ENCODE measurements at regions of chr1 and their contacts with region 1.

Region 1: GRCh38 chr1:174999216-174999925 is 376 bp upstream of the CACYBP start:
- DNase-seq: peak; percentile 99
- ATAC-seq: peak; percentile 85
- H3K4me3 Mint-ChIP-seq: no peak overlapping the region
- H3K27ac Mint-ChIP-seq: no peak overlapping the region
- H3K4me1 Mint-ChIP-seq: peaks cover 41% of the 10 kb centered on the region
- H3K27me3 Mint-ChIP-seq: no peaks in the 10 kb centered on the region

Region 2: GRCh38 chr1:173476664-173477285 is 1522.6 kb before region 1 on chr1:
- CTCF ChIA-PET with region 1: no interaction called
- POLR2A ChIA-PET with region 1: no interaction called
- intact Hi-C with region 1: loop called in 1 of 2 experiments (anchors 2 kb)
- DNase-seq: peak; percentile 92
- ATAC-seq: peak; percentile 85
- H3K4me3 Mint-ChIP-seq: peak overlapping the region; percentile 89
- H3K27ac Mint-ChIP-seq: peak overlapping the region; percentile 91
- H3K4me1 Mint-ChIP-seq: peaks cover 58% of the 10 kb centered on the region
- H3K27me3 Mint-ChIP-seq: no peaks in the 10 kb centered on the region

Region 3: DNA sequence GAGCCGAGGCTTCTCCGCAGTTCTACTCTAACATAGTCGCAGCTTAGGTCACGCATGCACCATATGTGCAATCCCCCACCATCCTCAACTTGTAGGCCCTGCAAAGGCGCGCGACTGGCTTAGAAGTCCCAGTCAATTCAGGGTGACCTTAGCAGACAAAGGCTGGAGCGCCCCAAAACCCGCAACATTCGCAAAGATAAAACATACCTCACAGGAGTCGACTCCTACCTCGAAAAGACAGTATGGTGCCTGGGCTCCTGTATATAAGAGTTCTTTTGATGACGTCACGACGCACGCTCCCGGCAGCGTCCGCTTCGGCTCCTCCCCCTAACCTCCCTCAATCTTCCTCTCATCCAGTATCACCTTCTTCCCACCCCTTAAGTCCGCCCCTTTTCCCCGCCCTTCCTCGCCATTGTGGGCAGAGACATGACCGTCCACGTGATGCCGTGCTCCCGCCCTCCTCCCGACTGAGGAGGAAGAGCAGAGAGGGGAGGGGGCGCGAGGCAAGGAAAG is 1131.6 kb before region 1 on chr1 and contains the start of gene GAS5:
- CTCF ChIA-PET with region 1: no interaction called
- POLR2A ChIA-PET with region 1: interaction called, 3 read pairs
- intact Hi-C with region 1: loop called in 1 of 2 experiments (anchors 2 kb)
- DNase-seq: peak; percentile 100
- ATAC-seq: peak; percentile 82
- H3K4me3 Mint-ChIP-seq: peak within 1 kb of the TSS; percentile 91
- H3K27ac Mint-ChIP-seq: peak within 1 kb of the TSS; percentile 97
- H3K4me1 Mint-ChIP-seq: peaks cover 57% of the 10 kb centered on the region
- H3K27me3 Mint-ChIP-seq: no peaks in the 10 kb centered on the region
- total RNA-seq, gene GAS5: 878 to 1,203 TPM

Region 4: DNA sequence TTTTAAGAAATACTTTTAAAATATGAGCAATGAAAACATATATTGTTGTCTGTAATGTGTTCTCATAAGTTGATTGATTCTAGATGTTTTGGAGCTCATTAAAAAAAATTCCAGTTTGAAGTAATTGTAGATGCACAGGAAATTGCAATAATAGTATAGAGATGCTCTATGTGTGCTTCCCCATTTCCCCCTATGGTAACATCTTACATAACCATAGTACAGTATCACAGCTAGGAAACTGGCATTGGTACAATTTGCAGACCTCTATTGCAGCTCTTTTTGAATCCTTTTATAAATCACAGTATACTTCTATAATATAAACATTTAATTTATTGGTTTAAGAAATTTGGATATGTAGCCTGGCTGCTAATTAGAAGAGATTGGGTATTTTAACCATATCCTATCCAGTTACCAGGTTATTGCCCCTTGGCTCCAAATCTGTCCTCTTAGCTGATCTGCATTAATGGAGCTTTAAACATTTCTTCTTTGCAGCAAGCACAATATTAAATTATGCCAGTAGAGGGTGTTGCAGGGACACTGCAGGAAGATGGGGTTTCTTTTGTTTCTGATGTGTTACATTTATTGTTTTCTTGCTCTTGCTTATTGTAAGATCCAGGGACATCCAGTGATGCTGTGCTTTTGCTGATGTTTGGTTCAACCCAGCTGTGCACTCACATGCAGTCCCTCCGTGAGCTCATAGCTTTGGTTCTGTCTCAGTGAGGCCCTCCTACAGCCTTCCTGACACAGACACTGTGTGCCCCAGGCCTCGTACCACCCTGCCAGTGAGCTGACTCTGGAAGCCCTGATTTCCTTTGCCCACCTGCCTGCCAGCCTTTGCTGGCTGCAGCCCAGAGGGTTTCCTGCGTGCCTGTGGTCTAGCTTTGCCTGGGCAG is 736.8 kb before region 1 on chr1:
- CTCF ChIA-PET with region 1: interaction called, 3 read pairs
- POLR2A ChIA-PET with region 1: no interaction called
- intact Hi-C with region 1: loop called in 1 of 2 experiments (anchors 5 kb)
- DNase-seq: no peak
- ATAC-seq: no peak
- H3K4me3 Mint-ChIP-seq: no peak overlapping the region
- H3K27ac Mint-ChIP-seq: no peak overlapping the region
- H3K4me1 Mint-ChIP-seq: no peaks in the 10 kb centered on the region
- H3K27me3 Mint-ChIP-seq: no peaks in the 10 kb centered on the region

Region 5: GRCh38 chr1:174912264-174912663 is 87.1 kb before region 1 on chr1:
- CTCF ChIA-PET with region 1: no interaction called
- POLR2A ChIA-PET with region 1: interaction called, 3 read pairs
- intact Hi-C with region 1: loop called in 1 of 2 experiments (anchors 1 kb)
- DNase-seq: peak; percentile 65
- ATAC-seq: peak; percentile 85
- H3K4me3 Mint-ChIP-seq: no peak overlapping the region
- H3K27ac Mint-ChIP-seq: peak overlapping the region; percentile 63
- H3K4me1 Mint-ChIP-seq: peaks cover 57% of the 10 kb centered on the region
- H3K27me3 Mint-ChIP-seq: no peaks in the 10 kb centered on the region

Region 6: GRCh38 chr1:174953285-174954072 is 45.9 kb before region 1 on chr1:
- CTCF ChIA-PET with region 1: no interaction called
- POLR2A ChIA-PET with region 1: no interaction called
- intact Hi-C with region 1: no loop called
- DNase-seq: no peak
- ATAC-seq: no peak
- H3K4me3 Mint-ChIP-seq: no peak overlapping the region
- H3K27ac Mint-ChIP-seq: no peak overlapping the region
- H3K4me1 Mint-ChIP-seq: peaks cover 34% of the 10 kb centered on the region
- H3K27me3 Mint-ChIP-seq: no peaks in the 10 kb centered on the region

Region 7: GRCh38 chr1:175023043-175023921 is 23.9 kb after region 1 on chr1 and contains the start of gene MRPS14:
- CTCF ChIA-PET with region 1: interaction called, 24 read pairs
- POLR2A ChIA-PET with region 1: interaction called, 65 read pairs
- intact Hi-C with region 1: loop called (anchors 1 kb)
- DNase-seq: peak; percentile 99
- ATAC-seq: peak; percentile 92
- H3K4me3 Mint-ChIP-seq: peak within 1 kb of the TSS; percentile 87
- H3K27ac Mint-ChIP-seq: peak within 1 kb of the TSS; percentile 92
- H3K4me1 Mint-ChIP-seq: peaks cover 25% of the 10 kb centered on the region
- H3K27me3 Mint-ChIP-seq: no peaks in the 10 kb centered on the region
- total RNA-seq, gene MRPS14: 38.7 to 43.7 TPM

Region 8: GRCh38 chr1:175580841-175581240 is 581.5 kb after region 1 on chr1:
- CTCF ChIA-PET with region 1: no interaction called
- POLR2A ChIA-PET with region 1: no interaction called
- intact Hi-C with region 1: no loop called
- DNase-seq: no peak
- ATAC-seq: no peak
- H3K4me3 Mint-ChIP-seq: no peak overlapping the region
- H3K27ac Mint-ChIP-seq: no peak overlapping the region
- H3K4me1 Mint-ChIP-seq: no peaks in the 10 kb centered on the region
- H3K27me3 Mint-ChIP-seq: no peaks in the 10 kb centered on the region

Measured in activated CD4-positive, alpha-beta T cell treated with anti-CD3 and anti-CD28 coated beads for 36 hours (primary cell).